ENCODE measurements at regions of chr6 and their contacts with region 1.

Region 1: GRCh38 chr6:45946352-45946751 is 69.3 kb downstream of the CLIC5 start:
- DNase-seq: peak; percentile 45
- ATAC-seq: peak; percentile 95
- H3K4me3 Mint-ChIP-seq: no peak overlapping the region
- H3K27ac Mint-ChIP-seq: no peak overlapping the region
- H3K4me1 Mint-ChIP-seq: peaks cover 19% of the 10 kb centered on the region
- H3K27me3 Mint-ChIP-seq: peaks cover 2% of the 10 kb centered on the region; the same call in 1 of the 2 replicates
- CTCF ChIP-seq: no peak

Region 2: DNA sequence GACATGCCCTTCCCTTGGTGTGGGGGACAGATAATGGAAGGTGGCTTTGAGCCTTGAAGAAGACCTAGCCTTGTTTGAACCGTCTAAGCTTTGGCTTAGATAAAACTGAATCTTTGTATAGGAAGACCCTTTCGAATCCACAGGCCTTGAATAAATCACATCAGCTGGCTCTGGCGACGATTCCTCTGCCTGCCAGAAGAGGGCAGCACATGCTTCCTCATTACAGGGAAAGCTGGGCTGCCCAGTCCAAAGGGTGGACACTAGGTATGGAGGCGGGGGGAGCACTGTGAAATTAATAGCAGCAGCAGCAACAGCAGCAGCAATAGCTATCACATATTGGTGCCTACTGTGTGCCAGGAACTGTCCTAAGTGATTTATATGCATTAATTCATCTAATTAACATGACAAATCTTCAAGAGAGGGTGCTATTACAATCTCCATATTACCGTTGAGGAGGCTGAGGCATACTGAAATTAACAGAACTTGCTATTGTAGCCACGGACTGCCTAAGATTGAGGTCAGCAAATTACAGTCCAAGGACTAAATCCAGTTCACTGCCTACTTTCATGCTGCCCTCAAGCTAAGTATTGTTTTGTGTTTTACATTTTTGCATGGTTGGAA is 15.8 kb before region 1 on chr6:
- CTCF ChIA-PET with region 1: interaction called, 21 read pairs
- POLR2A ChIA-PET with region 1: no interaction called
- DNase-seq: peak; percentile 77
- ATAC-seq: peak; percentile 28; the same call in 1 of the 2 replicates
- H3K4me3 Mint-ChIP-seq: no peak overlapping the region
- H3K27ac Mint-ChIP-seq: no peak overlapping the region
- H3K4me1 Mint-ChIP-seq: peaks cover 61% of the 10 kb centered on the region
- H3K27me3 Mint-ChIP-seq: peaks cover 19% of the 10 kb centered on the region
- CTCF ChIP-seq: peak; percentile 84

Measured in WTC11 (cell line).